Activated CD4-positive, alpha-beta T cell treated with anti-CD3 and anti-CD28 coated beads, Interleukin-2, amount 10 ng/mL, durations not matched to agents 24 days and 14 days (primary cell): ENCODE measurements at regions of chr2 and their contacts with region 1.

Region 1: DNA sequence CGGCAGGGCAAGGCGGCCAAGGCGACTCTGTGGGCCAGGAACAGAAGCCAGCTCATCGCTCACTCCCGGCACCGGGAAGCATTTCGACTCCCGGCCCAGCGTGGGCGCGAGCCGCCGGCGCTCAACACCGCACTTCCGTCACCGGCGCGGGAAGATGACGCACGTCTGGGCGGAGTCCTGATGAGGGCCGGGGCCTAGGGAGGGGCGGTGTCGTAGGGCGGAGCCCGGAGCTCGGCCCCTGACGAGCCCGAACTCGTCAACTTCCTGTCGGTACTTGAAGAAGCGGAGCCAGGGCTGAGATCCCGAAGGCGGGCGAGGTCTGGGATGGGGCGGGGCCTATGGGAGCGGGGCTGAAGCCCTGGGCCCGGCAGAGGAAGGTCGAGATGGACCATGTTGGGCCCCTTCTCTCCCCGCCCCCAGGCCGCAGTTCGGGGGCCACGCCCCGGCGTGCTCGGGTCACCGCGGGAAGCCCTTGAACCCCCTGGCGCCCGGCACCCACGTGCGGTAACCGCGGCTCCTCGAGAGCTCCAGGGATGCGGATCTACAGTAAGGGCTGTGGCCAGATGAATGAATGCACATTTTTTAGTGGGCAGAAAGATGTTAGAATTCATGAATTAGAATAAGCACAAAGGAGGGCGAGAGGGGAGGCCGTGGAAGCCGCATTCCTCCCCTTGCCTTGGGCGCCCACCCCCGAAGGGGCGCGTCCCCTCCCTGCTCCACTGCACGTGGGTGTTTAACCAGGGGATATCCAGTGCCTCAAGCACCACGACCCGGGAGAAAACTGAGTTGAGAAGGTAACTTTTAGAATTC is at the start of gene RNASEH1:
- DNase-seq: peak; percentile 100
- H3K4me3 Mint-ChIP-seq: peak within 1 kb of the TSS; percentile 89
- H3K27ac Mint-ChIP-seq: peak within 1 kb of the TSS; percentile 90
- H3K4me1 Mint-ChIP-seq: peaks cover 26% of the 10 kb centered on the region
- H3K27me3 Mint-ChIP-seq: no peaks in the 10 kb centered on the region
- total RNA-seq, gene RNASEH1: 27.8 and 29.8 TPM in 2 replicates

Region 2: DNA sequence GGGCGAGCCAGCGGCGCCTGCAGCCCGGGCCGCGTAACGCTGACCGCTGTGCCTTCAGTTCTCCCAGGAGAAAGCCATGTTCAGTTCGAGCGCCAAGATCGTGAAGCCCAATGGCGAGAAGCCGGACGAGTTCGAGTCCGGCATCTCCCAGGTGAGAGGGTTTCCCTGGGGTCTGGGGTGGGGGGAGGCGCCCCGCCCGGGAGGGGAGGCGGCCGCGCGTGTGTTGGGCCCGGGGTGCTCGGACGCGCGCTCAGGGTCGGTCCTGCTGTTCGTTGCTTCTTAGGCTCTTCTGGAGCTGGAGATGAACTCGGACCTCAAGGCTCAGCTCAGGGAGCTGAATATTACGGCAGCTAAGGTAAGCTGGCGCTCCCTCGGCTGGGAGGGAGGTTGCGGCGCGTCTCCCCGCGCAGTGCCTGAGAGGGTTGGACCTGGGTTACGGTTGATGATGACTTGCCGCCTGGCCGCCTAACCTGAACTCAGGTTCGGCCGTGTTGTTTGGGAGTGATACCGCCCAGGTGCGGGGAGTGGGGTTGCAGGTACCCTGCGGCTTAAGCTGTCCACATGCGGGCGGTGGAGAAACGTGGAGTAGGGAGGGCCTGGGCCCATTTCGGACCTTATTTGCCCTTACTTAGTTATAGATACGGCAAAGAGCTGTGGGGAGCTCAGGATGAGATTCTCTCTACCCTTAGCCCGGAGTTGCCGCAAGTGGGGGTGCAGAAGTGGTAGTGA is 17.3 kb after region 1 on chr2:
- intact Hi-C with region 1: loop called (anchors 1 kb)
- DNase-seq: peak; percentile 78
- H3K4me3 Mint-ChIP-seq: peak overlapping the region; percentile 92
- H3K27ac Mint-ChIP-seq: peak overlapping the region; percentile 84
- H3K4me1 Mint-ChIP-seq: peaks cover 45% of the 10 kb centered on the region
- H3K27me3 Mint-ChIP-seq: no peaks in the 10 kb centered on the region

Region 3: GRCh38 chr2:3595985-3596384 is 37.6 kb after region 1 on chr2:
- intact Hi-C with region 1: loop called (anchors 2 kb)
- DNase-seq: peak; percentile 71
- H3K4me3 Mint-ChIP-seq: no peak overlapping the region
- H3K27ac Mint-ChIP-seq: no peak overlapping the region
- H3K4me1 Mint-ChIP-seq: peaks cover 11% of the 10 kb centered on the region
- H3K27me3 Mint-ChIP-seq: peaks cover 20% of the 10 kb centered on the region